A549 (cell line): ENCODE measurements at regions of chr10 and their contacts with region 1.

Region 1: GRCh38 chr10:114876602-114877300 is 55.2 kb downstream of the FHIP2A start:
- DNase-seq: peak; percentile 68 to 87
- ATAC-seq: peak; percentile 89 to 95
- H3K4me3 ChIP-seq: no peak overlapping the region
- H3K27ac ChIP-seq: no peak overlapping the region
- H3K4me1 ChIP-seq: peaks cover 3% of the 10 kb centered on the region; the same call in 1 of the 3 replicates
- CTCF ChIP-seq: peak; percentile 79
- EP300 ChIP-seq: no peak
- POLR2A ChIP-seq: no peak
- RAD21 ChIP-seq: peak; percentile 89 to 90

Region 2: DNA sequence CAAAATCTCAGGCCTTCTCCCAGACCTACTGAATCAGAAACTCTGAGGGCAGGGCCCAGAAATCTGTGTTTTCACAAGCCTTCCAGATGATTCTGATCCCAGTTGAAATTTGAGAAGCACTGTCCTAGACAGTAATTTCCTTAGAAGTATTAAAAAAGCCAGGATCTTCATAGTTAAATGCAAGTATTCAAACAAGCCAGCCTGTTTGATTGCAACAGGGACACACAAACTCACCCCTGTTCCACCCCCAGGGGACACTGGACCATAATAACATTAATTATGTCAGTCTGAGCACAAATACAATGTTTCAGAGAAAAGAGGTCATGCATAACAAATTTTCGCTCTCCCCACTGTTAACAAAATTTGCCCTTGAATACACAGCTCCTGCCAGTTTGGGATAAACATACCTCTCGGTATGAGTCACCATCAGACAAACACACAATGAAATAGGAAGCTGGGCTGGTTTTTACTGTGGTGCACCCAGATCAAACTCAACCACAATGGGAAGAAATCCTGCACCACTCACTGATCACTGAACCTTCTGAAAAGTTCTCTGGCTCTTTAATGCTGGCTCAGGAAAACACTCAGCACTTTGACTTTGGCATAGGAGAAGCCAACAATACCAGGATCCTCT is 253.0 kb before region 1 on chr10:
- CTCF ChIA-PET with region 1: no interaction called
- POLR2A ChIA-PET with region 1: no interaction called
- DNase-seq: peak; percentile 65 to 66
- ATAC-seq: peak; percentile 85 to 94
- H3K4me3 ChIP-seq: no peak overlapping the region
- H3K27ac ChIP-seq: peak overlapping the region; percentile 60 to 86
- H3K4me1 ChIP-seq: peaks cover 37% of the 10 kb centered on the region
- CTCF ChIP-seq: no peak
- EP300 ChIP-seq: peak in 1 of 2 experiments; percentile 32; a peak in 1 of 5 replicates
- POLR2A ChIP-seq: no peak
- RAD21 ChIP-seq: peak; percentile 11 to 32; a peak in 1 of 5 replicates

Region 3: DNA sequence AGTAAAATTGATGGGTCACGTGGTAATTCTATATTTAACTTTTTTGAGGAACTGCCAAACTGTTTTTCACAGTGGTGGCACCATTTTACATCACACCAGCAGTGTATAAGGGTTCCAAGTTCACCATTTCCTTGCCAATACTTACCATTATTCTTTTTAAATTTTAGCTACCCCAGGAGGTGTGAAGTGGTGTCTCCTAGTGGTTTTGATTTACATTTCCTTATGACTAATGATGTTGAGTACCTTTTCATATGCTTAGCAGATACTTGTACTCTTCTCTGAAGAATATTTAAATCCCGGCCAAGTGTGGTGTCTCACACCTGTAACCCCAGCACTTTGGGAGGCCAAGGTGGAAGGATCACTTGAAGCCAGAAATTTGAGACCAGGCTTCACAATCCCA is 26.6 kb before region 1 on chr10:
- CTCF ChIA-PET with region 1: no interaction called
- POLR2A ChIA-PET with region 1: no interaction called
- DNase-seq: no peak
- ATAC-seq: no peak
- H3K4me3 ChIP-seq: no peak overlapping the region
- H3K27ac ChIP-seq: no peak overlapping the region
- H3K4me1 ChIP-seq: peaks cover 8% of the 10 kb centered on the region; the same call in 2 of the 3 replicates
- CTCF ChIP-seq: no peak
- EP300 ChIP-seq: no peak
- POLR2A ChIP-seq: no peak
- RAD21 ChIP-seq: no peak

Region 4: DNA sequence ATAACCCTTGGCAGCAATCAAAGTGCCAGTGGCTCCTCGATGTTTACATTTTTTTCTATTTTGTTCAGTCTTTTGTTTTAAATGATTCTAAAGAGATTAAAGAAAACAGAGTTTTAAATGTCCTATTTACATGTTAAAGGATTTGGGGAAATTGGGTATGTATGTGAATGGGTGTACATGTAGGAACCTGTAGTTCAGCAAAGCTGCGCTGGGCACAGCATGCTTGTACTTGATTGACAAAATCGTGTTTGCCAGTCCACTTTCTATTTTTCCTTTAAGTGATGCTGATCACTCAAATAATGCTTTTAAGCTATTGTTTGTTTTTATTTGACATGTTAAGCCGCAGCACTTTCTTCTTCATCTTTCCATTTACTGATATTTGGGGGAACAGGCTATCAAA is 14.3 kb before region 1 on chr10:
- CTCF ChIA-PET with region 1: interaction called, 35 read pairs
- POLR2A ChIA-PET with region 1: no interaction called
- DNase-seq: no peak
- ATAC-seq: no peak
- H3K4me3 ChIP-seq: no peak overlapping the region
- H3K27ac ChIP-seq: no peak overlapping the region
- H3K4me1 ChIP-seq: peaks cover 10% of the 10 kb centered on the region
- CTCF ChIP-seq: no peak
- EP300 ChIP-seq: no peak
- POLR2A ChIP-seq: no peak
- RAD21 ChIP-seq: no peak

Region 5: DNA sequence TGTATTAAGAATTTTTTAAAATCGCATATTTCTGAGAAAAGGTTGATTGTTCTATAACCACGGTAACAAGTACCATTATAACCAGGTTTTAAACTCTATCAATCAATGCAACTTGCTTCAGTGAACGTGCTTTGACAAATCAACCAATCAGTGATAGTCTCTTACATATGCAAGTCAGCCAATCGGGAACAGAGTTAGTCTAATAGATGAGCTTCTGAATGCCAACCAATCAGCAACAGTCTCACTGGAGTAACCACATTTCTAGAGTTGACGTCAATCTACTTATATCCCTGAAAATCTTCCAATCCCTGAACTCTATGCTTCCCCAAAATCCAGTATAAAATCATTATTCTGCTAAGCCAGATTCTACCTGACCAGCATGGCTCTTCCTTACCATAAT is 16.5 kb after region 1 on chr10:
- CTCF ChIA-PET with region 1: interaction called, 35 read pairs
- POLR2A ChIA-PET with region 1: no interaction called
- DNase-seq: peak in 1 of 2 experiments; percentile 61
- ATAC-seq: peak in 1 of 2 experiments; percentile 70; a peak in 3 of 6 replicates
- H3K4me3 ChIP-seq: no peak overlapping the region
- H3K27ac ChIP-seq: no peak overlapping the region
- H3K4me1 ChIP-seq: no peaks in the 10 kb centered on the region
- CTCF ChIP-seq: no peak
- EP300 ChIP-seq: no peak
- POLR2A ChIP-seq: no peak
- RAD21 ChIP-seq: no peak

Region 6: DNA sequence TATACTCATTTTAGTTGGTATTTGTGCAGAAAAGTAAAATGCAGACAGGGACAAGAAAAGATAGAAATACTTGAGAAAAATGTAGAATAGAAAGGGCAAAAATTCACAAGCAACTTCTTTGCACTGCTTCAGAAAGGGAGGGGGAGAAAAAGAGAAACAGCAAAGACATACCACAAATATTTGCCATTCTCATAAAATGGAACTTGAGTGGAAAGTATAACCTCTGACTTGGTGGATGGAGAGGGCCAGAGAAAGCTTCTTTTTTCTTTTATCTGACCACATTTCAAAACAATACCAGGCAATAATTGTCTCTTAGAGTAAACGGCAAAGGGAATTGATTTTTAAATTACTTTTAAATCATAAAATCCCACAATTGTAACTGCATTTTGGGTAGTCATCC is 25.4 kb after region 1 on chr10:
- CTCF ChIA-PET with region 1: interaction called, 35 read pairs
- POLR2A ChIA-PET with region 1: no interaction called
- DNase-seq: no peak
- ATAC-seq: no peak
- H3K4me3 ChIP-seq: no peak overlapping the region
- H3K27ac ChIP-seq: no peak overlapping the region
- H3K4me1 ChIP-seq: peaks cover 27% of the 10 kb centered on the region
- CTCF ChIP-seq: no peak
- EP300 ChIP-seq: no peak
- POLR2A ChIP-seq: no peak
- RAD21 ChIP-seq: no peak

Region 7: DNA sequence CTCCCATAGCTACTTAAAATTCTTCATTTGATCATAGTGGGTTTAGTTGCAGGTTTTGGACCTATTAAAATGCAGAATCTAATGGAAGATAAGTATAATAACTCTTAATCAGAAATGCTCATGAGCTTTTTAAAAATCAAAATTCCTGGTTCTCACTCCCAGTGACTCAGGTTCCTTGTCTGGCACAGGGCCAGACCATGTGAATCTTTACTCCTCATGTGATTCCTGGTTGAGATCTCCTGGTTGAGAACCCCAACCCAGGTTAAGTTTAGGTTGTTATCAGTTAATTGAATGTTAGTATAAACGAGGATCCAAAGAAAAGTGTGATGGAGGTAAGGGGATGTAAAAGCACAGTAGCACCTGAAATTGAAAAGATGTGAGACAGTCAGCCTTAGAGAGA is 43.7 kb after region 1 on chr10:
- CTCF ChIA-PET with region 1: interaction called, 15 read pairs
- POLR2A ChIA-PET with region 1: no interaction called
- DNase-seq: no peak
- ATAC-seq: no peak
- H3K4me3 ChIP-seq: no peak overlapping the region
- H3K27ac ChIP-seq: no peak overlapping the region
- H3K4me1 ChIP-seq: peaks cover 19% of the 10 kb centered on the region
- CTCF ChIP-seq: no peak
- EP300 ChIP-seq: no peak
- POLR2A ChIP-seq: no peak
- RAD21 ChIP-seq: no peak

Region 8: GRCh38 chr10:115129752-115130151 is 253.0 kb after region 1 on chr10:
- CTCF ChIA-PET with region 1: interaction called, 71 read pairs
- POLR2A ChIA-PET with region 1: no interaction called
- DNase-seq: peak in 1 of 2 experiments; percentile 23
- ATAC-seq: peak in 1 of 2 experiments; percentile 66; a peak in 2 of 6 replicates
- H3K4me3 ChIP-seq: no peak overlapping the region
- H3K27ac ChIP-seq: no peak overlapping the region
- H3K4me1 ChIP-seq: no peaks in the 10 kb centered on the region
- CTCF ChIP-seq: peak; percentile 65
- EP300 ChIP-seq: no peak
- POLR2A ChIP-seq: no peak
- RAD21 ChIP-seq: peak; percentile 68 to 86